ENCODE measurements at regions of chr19 and their contacts with region 1.

Region 1: GRCh38 chr19:9914315-9915207 is 21.8 kb downstream of the OLFM2 start:
- DNase-seq: peak; percentile 94
- H3K4me3 ChIP-seq: peak overlapping the region; percentile 57
- H3K27ac ChIP-seq: peak overlapping the region; percentile 80
- H3K4me1 ChIP-seq: peaks cover 18% of the 10 kb centered on the region
- H3K27me3 ChIP-seq: no peaks in the 10 kb centered on the region
- CTCF ChIP-seq: peak; percentile 79

Region 2: DNA sequence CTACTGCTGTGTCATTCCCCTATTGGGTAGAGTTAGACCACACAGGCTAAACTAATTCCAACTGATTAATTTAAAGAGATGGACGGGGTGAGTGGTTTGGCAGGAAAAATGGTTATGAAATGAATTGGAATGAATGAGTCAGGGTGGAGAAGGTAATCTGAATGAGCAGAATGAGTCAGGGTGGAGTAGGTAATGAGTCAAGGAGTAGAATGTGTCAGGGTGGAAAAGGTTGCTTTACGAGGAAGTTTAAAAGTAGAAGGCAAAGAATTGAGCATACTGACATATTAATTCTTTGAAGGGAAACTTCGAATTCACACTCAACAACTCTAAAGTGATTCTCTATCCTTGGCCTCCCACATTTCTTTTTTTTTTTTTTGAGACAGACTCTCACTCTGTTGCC is 317.5 kb before region 1 on chr19:
- CTCF ChIA-PET with region 1: no interaction called
- POLR2A ChIA-PET with region 1: no interaction called
- intact Hi-C with region 1: no loop called
- DNase-seq: no peak
- H3K4me3 ChIP-seq: no peak overlapping the region
- H3K27ac ChIP-seq: no peak overlapping the region
- H3K4me1 ChIP-seq: no peaks in the 10 kb centered on the region
- H3K27me3 ChIP-seq: no peaks in the 10 kb centered on the region
- CTCF ChIP-seq: no peak

Region 3: GRCh38 chr19:9847087-9847671 is 67.4 kb before region 1 on chr19:
- CTCF ChIA-PET with region 1: no interaction called
- POLR2A ChIA-PET with region 1: no interaction called
- intact Hi-C with region 1: loop called (anchors 5 kb)
- DNase-seq: peak; percentile 81
- H3K4me3 ChIP-seq: no peak overlapping the region
- H3K27ac ChIP-seq: peak overlapping the region; percentile 42
- H3K4me1 ChIP-seq: peaks cover 14% of the 10 kb centered on the region
- H3K27me3 ChIP-seq: no peaks in the 10 kb centered on the region
- CTCF ChIP-seq: peak; percentile 70